ENCODE measurements at regions of chr5 and their contacts with region 1.

Region 1: GRCh38 chr5:178940569-178941360 is at the start of gene ZNF454:
- DNase-seq: peak; percentile 95 to 98 (median 98)
- ATAC-seq: peak; percentile 99 to 100
- H3K4me3 ChIP-seq: peak within 1 kb of the TSS; percentile 48
- H3K27ac ChIP-seq: peak within 1 kb of the TSS; percentile 68
- H3K4me1 ChIP-seq: no peaks in the 10 kb centered on the region
- H3K27me3 ChIP-seq: no peaks in the 10 kb centered on the region
- total RNA-seq, gene ZNF454: 2.9 to 3.4 (median 3.0) TPM

Region 2: GRCh38 chr5:178372142-178372571 is 568.6 kb before region 1 on chr5:
- intact Hi-C with region 1: no loop called
- DNase-seq: peak in 2 of 3 donors; percentile 62 to 76
- ATAC-seq: peak; percentile 26 to 43
- H3K4me3 ChIP-seq: no peak overlapping the region
- H3K27ac ChIP-seq: no peak overlapping the region
- H3K4me1 ChIP-seq: no peaks in the 10 kb centered on the region
- H3K27me3 ChIP-seq: no peaks in the 10 kb centered on the region

Region 3: GRCh38 chr5:178416919-178417318 is 523.8 kb before region 1 on chr5:
- intact Hi-C with region 1: no loop called
- DNase-seq: no peak
- ATAC-seq: peak in 1 of 2 donors; percentile 42
- H3K4me3 ChIP-seq: no peak overlapping the region
- H3K27ac ChIP-seq: no peak overlapping the region
- H3K4me1 ChIP-seq: no peaks in the 10 kb centered on the region
- H3K27me3 ChIP-seq: no peaks in the 10 kb centered on the region

Region 4: GRCh38 chr5:178732281-178732680 is 208.5 kb before region 1 on chr5:
- intact Hi-C with region 1: no loop called
- DNase-seq: no peak
- ATAC-seq: no peak
- H3K4me3 ChIP-seq: no peak overlapping the region
- H3K27ac ChIP-seq: no peak overlapping the region
- H3K4me1 ChIP-seq: no peaks in the 10 kb centered on the region
- H3K27me3 ChIP-seq: no peaks in the 10 kb centered on the region

Region 5: GRCh38 chr5:178818094-178818493 is 122.7 kb before region 1 on chr5:
- intact Hi-C with region 1: no loop called
- DNase-seq: no peak
- ATAC-seq: no peak
- H3K4me3 ChIP-seq: no peak overlapping the region
- H3K27ac ChIP-seq: no peak overlapping the region
- H3K4me1 ChIP-seq: no peaks in the 10 kb centered on the region
- H3K27me3 ChIP-seq: no peaks in the 10 kb centered on the region

Region 6: GRCh38 chr5:179023528-179024430 is 83.0 kb after region 1 on chr5 and contains the start of gene ZNF879:
- intact Hi-C with region 1: loop called in 1 of 4 experiments (anchors 10 kb)
- DNase-seq: peak; percentile 95 to 98 (median 97)
- ATAC-seq: peak; percentile 98 to 99
- H3K4me3 ChIP-seq: peak within 1 kb of the TSS; percentile 84
- H3K27ac ChIP-seq: peak within 1 kb of the TSS; percentile 85
- H3K4me1 ChIP-seq: peaks cover 4% of the 10 kb centered on the region
- H3K27me3 ChIP-seq: no peaks in the 10 kb centered on the region
- total RNA-seq, gene ZNF879: 4.1 to 6.2 (median 5.4) TPM

Measured in right cardiac atrium (tissue), 5 donors.